ENCODE measurements at regions of chr5 and their contacts with region 1.

Region 1: GRCh38 chr5:57137401-57137800 is 36.5 kb upstream of the GPBP1 start:
- DNase-seq: no peak
- H3K4me3 ChIP-seq: no peak overlapping the region
- H3K27ac ChIP-seq: no peak overlapping the region
- H3K4me1 ChIP-seq: no peaks in the 10 kb centered on the region
- H3K27me3 ChIP-seq: no peaks in the 10 kb centered on the region
- CTCF ChIP-seq: no peak
- EP300 ChIP-seq: no peak
- POLR2A ChIP-seq: no peak

Region 2: GRCh38 chr5:56893251-56893951 is 244.0 kb before region 1 on chr5:
- in situ Hi-C with region 1: loop called in 1 of 4 experiments (anchors 10 kb)
- intact Hi-C with region 1: no loop called
- DNase-seq: no peak
- H3K4me3 ChIP-seq: no peak overlapping the region
- H3K27ac ChIP-seq: no peak overlapping the region
- H3K4me1 ChIP-seq: no peaks in the 10 kb centered on the region
- H3K27me3 ChIP-seq: no peaks in the 10 kb centered on the region
- CTCF ChIP-seq: no peak
- EP300 ChIP-seq: no peak
- POLR2A ChIP-seq: no peak

Region 3: DNA sequence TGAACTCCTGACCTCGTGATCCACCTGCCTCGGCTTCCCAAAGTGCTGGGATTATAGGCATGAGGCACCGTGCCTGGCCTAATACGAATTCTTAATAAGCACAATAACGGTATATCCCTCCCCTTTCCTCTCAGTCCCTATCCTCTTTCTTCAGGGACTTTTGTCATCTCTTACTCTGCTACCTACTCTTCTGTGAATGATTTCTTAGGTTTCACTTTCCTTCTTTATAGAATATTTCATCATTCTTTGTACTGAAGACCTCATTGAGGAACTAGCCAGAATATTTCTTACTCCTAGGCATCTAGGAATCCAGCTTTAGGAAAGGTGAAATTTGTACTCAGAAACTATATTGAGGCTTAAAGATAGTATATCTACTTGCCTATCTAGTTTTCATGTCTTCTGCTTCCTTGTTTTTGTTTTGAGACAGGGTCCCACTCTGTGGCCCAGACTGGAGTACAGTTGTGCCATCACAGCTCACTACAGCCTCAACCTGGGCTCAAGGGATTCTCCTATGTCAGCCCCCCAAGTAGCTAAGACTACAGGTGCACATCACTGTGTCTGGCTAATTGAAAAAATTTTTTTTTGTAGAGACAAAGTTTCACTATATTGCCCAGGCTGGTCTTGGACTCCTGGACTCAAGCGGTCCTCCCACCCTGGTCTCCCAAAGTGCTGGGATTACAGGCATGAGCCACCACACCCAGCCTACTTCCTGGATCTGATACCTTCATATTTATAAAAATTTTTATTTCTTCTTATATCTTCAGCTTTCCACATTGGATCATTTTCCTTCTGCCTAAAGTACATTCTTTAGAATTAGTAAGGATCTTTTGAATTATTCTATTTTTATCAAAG is 106.1 kb after region 1 on chr5:
- in situ Hi-C with region 1: no loop called
- intact Hi-C with region 1: no loop called
- DNase-seq: peak; percentile 26
- H3K4me3 ChIP-seq: no peak overlapping the region
- H3K27ac ChIP-seq: peak overlapping the region in 2 of 4 donors; percentile 13 to 27
- H3K4me1 ChIP-seq: peaks cover 0 to 23% (median 6%) of the 10 kb centered on the region in 4 donors
- H3K27me3 ChIP-seq: no peaks in the 10 kb centered on the region
- CTCF ChIP-seq: no peak
- EP300 ChIP-seq: no peak
- POLR2A ChIP-seq: no peak

Measured in transverse colon (tissue), 4 donors.